ENCODE measurements at regions of chr10 and their contacts with region 1.

Region 1: DNA sequence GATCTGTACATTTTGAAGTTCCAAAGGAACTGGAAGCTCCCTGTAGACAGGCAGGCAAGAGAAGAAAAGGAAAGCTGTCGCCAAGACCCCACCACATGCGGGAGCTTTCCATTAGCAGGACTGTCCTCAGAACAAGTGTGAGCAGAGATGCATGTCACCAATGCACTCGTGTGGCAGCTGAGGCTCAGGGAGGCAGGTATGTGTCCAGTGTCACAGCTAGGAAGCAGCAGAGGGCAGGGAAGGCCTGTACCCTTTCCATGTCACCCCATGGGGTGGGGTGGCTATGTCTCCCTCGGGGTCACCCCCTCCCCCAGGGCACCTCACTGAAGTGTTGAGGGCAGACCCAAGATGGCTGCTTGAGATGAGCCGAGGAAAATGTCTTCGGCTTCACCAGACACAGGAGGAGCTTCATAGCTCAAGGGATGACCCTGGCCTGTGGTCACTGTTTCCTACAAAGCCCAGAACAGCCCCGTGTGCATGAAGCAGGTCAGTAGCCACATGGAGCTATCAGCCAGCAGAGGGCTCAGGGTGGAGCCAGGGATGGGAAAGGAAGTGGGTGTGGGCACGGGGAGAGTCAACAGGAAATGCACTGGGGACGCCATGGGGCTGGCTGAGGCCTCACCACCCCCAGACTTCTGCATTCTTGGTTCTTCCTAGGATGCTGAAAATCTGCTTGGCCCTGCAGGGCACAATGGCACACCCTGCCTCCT is 96.6 kb downstream of the FAM53B start:
- DNase-seq: peak; percentile 91
- ATAC-seq: peak; percentile 72
- H3K4me3 Mint-ChIP-seq: peak overlapping the region; percentile 54
- H3K27ac Mint-ChIP-seq: peak overlapping the region; percentile 92
- H3K4me1 Mint-ChIP-seq: peaks cover 81% of the 10 kb centered on the region
- H3K27me3 Mint-ChIP-seq: no peaks in the 10 kb centered on the region

Region 2: GRCh38 chr10:124626759-124627380 is 20.7 kb before region 1 on chr10:
- CTCF ChIA-PET with region 1: interaction called, 10 read pairs
- DNase-seq: peak; percentile 71
- ATAC-seq: peak; percentile 67
- H3K4me3 Mint-ChIP-seq: no peak overlapping the region
- H3K27ac Mint-ChIP-seq: peak overlapping the region; percentile 72
- H3K4me1 Mint-ChIP-seq: peaks cover 35% of the 10 kb centered on the region
- H3K27me3 Mint-ChIP-seq: no peaks in the 10 kb centered on the region

Region 3: DNA sequence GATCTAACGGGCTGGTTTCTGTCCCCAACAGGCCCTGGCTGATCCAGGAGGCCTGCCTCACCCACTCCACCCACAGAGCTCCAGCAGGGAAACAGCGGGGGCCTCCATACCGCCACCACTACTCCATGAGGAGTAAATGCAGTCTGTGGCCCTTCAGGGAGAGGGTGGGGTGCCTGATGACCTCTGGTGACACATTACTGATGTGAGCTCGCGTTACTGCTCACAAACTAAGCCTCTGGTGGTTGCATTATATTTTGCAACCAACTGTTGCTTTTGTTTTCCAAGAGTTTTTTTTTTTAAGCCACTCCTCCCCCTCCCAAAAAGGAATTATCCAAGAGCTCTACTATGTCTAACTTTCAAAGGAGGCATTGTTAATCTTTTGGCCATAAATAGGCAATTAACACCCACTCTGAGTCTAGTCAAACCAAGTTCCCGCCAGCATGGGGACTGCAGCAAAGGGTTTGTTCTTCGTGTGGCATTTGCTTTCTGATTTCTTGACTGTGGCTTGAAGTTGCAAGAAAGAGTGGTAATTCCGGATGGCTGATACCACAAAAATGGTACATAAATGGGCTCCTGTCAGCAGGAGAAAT is 24.0 kb after region 1 on chr10:
- CTCF ChIA-PET with region 1: interaction called, 30 read pairs
- DNase-seq: no peak
- ATAC-seq: peak; percentile 54
- H3K4me3 Mint-ChIP-seq: no peak overlapping the region
- H3K27ac Mint-ChIP-seq: peak overlapping the region; percentile 78
- H3K4me1 Mint-ChIP-seq: peaks cover 54% of the 10 kb centered on the region
- H3K27me3 Mint-ChIP-seq: no peaks in the 10 kb centered on the region

Region 4: GRCh38 chr10:124688889-124689670 is 41.5 kb after region 1 on chr10:
- CTCF ChIA-PET with region 1: interaction called, 44 read pairs
- DNase-seq: peak; percentile 92
- ATAC-seq: peak; percentile 95
- H3K4me3 Mint-ChIP-seq: peak overlapping the region; percentile 52
- H3K27ac Mint-ChIP-seq: peak overlapping the region; percentile 94
- H3K4me1 Mint-ChIP-seq: peaks cover 88% of the 10 kb centered on the region
- H3K27me3 Mint-ChIP-seq: no peaks in the 10 kb centered on the region

Region 5: DNA sequence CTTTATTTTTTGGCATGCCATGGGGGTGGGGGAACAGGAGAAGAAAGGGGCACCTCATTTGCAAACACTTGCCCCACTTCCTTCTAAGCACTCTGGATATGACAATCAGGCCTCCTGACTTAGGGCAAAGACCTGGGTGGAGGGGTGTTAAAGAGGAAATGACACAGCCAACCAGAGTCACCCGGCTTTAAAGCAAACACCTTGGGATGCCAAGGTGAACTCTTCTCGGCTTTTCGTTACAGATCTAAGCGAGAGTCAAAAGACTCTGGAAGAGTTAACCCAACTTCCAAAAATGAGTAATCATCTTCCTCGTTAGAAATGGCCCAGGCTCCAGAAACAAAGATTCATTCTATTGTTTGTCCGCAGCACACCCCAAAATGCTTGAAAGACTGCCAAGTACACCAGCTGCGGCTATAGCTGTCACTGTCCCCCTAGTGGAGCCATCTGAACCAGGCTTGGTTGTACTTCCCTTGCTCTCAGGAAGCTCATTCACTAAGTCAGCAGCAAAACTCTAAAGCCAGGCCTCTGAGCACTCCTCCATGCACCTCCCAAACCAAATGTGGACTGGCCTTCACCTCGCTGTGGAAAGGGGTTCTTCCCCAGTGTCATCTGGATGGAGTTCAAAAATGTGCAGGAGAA is 71.8 kb after region 1 on chr10:
- CTCF ChIA-PET with region 1: interaction called, 62 read pairs
- DNase-seq: peak; percentile 87
- ATAC-seq: peak; percentile 61
- H3K4me3 Mint-ChIP-seq: peak overlapping the region; percentile 60
- H3K27ac Mint-ChIP-seq: peak overlapping the region; percentile 91
- H3K4me1 Mint-ChIP-seq: peaks cover 92% of the 10 kb centered on the region
- H3K27me3 Mint-ChIP-seq: no peaks in the 10 kb centered on the region

Measured in activated CD8-positive, alpha-beta memory T cell treated with anti-CD3 and anti-CD28 coated beads, Interleukin-2, amount 10 ng/mL, durations not matched to agents 7 days and 5 days (primary cell).